ENCODE measurements at regions of chr16 and their contacts with region 1.

Region 1: DNA sequence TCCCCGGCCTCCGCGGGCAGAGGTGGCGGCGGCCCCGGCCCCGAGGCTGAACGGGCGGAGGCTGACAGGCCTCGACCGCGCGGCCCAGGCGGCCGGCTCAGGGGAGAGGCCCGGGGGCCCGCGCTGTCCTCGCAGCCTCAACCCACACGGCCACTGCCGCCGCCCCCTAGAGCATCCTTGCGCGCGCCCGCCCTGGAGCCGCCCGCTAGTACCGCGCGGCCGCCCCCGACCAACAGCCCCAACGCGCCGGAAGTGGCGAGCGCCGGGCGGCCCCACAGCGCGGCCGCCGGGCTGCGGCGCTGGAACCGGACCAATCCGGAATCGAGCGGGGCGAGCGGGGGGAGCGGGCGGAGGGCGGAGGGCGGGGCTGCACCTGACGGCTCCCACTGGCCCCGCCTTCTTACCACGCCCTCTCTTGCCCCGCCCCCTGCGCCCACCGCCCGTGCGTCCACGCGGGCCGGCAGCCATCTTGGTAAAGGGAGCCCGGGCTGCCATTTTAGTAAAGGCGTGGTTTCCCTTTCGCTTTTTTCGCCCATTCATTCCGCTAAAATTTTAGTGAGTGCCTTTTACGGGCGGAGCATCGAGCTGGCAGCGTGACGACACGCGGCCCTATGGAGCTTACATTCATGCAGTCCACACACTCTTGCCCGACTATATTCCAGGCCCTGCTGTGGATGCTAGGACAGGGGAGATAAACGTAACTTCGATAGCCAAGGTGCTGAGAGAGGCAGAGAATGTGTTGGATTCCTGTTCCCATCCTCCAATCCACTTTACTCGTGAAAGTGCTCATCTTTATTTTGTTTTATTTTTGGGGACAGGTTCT is at the start of gene XPO6:
- H3K4me3 Mint-ChIP-seq: peak within 1 kb of the TSS; percentile 90
- H3K27ac Mint-ChIP-seq: peak within 1 kb of the TSS; percentile 86
- H3K4me1 Mint-ChIP-seq: peaks cover 44% of the 10 kb centered on the region
- H3K27me3 Mint-ChIP-seq: no peaks in the 10 kb centered on the region

Region 2: GRCh38 chr16:28158136-28158535 is 53.8 kb before region 1 on chr16:
- intact Hi-C with region 1: loop called (anchors 2 kb)
- H3K4me3 Mint-ChIP-seq: peak overlapping the region; percentile 45
- H3K27ac Mint-ChIP-seq: peak overlapping the region; percentile 65
- H3K4me1 Mint-ChIP-seq: peaks cover 43% of the 10 kb centered on the region
- H3K27me3 Mint-ChIP-seq: no peaks in the 10 kb centered on the region

Region 3: GRCh38 chr16:28181515-28181914 is 30.4 kb before region 1 on chr16:
- intact Hi-C with region 1: loop called (anchors 2 kb)
- H3K4me3 Mint-ChIP-seq: peak overlapping the region; percentile 83
- H3K27ac Mint-ChIP-seq: peak overlapping the region; percentile 89
- H3K4me1 Mint-ChIP-seq: peaks cover 84% of the 10 kb centered on the region
- H3K27me3 Mint-ChIP-seq: no peaks in the 10 kb centered on the region

Measured in dendritic cell treated with granulocyte-macrophage colony-stimulating factor and Interleukin-4, amounts not matched to agents 40 ng/mL and 50 ng/mL, for 4 days (primary cell).